ENCODE measurements at regions of chr7 and their contacts with region 1.

Region 1: GRCh38 chr7:139618482-139619366 is 95.2 kb downstream of the CLEC2L start:
- DNase-seq: peak in 4 of 5 donors; percentile 32 to 66 (median 44)
- H3K4me3 ChIP-seq: no peak overlapping the region
- H3K27ac ChIP-seq: no peak overlapping the region
- H3K4me1 ChIP-seq: no peaks in the 10 kb centered on the region
- H3K27me3 ChIP-seq: no peaks in the 10 kb centered on the region
- CTCF ChIP-seq: no peak
- EP300 ChIP-seq: no peak
- POLR2A ChIP-seq: no peak

Region 2: GRCh38 chr7:139494835-139495579 is 123.7 kb before region 1 on chr7:
- intact Hi-C with region 1: loop called in 1 of 4 experiments (anchors 10 kb)
- DNase-seq: no peak
- H3K4me3 ChIP-seq: no peak overlapping the region
- H3K27ac ChIP-seq: no peak overlapping the region
- H3K4me1 ChIP-seq: no peaks in the 10 kb centered on the region
- H3K27me3 ChIP-seq: no peaks in the 10 kb centered on the region
- CTCF ChIP-seq: no peak
- EP300 ChIP-seq: no peak
- POLR2A ChIP-seq: no peak

Region 3: DNA sequence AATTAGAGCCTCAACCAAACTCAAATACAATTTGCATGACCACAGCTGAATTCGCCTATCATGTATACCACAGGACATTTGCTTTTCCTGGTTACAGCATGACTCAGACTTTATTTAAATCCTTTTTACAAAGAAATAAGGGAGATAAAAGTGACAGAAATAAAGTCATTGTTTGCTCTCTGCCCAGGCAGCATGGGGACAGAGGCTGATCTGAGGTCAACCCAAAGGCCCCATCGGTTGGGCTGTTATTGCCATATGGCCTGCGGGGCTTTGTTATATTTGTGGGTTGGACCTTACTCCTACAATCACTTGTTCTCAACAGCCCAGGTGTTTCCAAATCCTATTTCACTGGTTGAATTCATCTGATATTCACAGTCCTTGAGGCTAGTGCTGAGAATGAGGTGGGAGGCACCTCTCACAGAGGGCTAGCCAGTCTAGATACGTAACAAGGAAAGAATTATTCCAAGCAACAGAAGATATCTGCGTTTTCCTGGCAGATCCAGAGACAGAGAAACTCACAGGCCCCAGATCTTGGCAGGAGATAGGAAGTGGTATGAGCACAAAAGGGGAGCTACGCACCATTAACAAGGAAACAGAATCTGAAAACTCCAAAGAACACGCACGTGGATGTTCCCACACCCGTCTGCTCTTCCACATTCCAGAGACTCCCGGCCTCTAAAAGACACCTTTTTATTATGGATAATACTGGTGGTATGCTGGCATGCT is 41.8 kb after region 1 on chr7:
- intact Hi-C with region 1: no loop called
- DNase-seq: no peak
- H3K4me3 ChIP-seq: no peak overlapping the region
- H3K27ac ChIP-seq: no peak overlapping the region
- H3K4me1 ChIP-seq: no peaks in the 10 kb centered on the region
- H3K27me3 ChIP-seq: no peaks in the 10 kb centered on the region
- CTCF ChIP-seq: no peak
- EP300 ChIP-seq: no peak
- POLR2A ChIP-seq: no peak

Region 4: DNA sequence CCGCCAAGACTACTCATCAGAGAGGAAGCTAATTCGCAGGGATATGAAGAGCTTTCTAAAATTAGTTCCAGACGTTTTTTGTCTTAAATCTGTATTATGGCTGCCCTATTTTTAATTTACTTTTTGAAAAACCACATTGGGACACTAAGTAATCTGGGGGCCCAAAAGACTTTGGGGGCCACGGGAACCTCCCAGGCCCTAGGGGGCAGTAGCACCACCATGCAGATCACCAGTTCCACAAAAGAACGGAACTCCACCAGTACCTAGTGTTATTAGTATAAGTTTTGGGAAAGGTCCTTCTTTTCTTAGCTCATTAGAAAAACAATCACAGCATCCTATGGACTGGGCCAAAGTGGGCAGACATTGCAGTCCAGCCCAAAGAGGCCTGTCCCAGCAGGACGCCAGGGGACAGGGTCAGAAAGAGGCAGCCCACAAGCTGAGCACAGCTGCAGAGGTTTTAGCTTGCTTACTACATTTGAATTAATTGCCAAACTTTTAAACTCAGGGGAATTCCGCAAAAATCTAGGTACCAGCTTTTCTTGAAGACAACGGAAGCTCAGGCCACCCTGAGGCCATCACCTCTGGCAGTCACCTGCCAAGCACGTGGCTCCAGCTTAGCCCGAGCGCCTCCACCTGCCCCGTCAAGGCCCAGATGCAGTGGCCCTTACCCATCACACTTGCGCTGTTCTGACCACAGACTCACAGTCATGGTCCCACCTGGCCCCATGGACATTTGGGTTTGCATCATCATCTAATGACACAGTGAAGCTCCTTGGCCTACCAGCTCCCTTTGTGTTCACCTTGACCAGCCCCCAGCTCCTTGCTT is 369.2 kb after region 1 on chr7:
- intact Hi-C with region 1: no loop called
- DNase-seq: no peak
- H3K4me3 ChIP-seq: no peak overlapping the region
- H3K27ac ChIP-seq: no peak overlapping the region
- H3K4me1 ChIP-seq: no peaks in the 10 kb centered on the region
- H3K27me3 ChIP-seq: no peaks in the 10 kb centered on the region
- CTCF ChIP-seq: no peak
- EP300 ChIP-seq: no peak
- POLR2A ChIP-seq: no peak

Measured in ovary (tissue), 10 donors.